CD8-positive, alpha-beta T cell (primary cell): ENCODE measurements at regions of chr15 and their contacts with region 1.

Region 1: DNA sequence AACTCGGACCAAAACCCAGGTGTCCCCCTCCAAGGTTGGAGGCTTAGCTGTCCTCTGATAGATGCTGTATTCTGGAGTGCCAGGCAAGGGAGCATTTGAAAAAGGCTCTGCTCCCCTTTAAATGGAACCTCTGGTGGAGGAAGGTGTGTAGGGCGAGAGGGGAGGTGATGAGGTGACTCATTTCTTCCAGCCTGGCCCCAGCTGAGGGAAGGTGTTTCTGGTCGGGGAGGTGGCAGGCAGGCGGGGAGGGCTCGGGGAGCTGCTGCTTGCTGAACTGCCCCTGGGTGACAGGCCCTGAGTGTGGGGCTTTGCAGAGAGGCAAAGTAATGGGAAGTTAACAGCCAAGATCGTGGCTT is 18.8 kb downstream of the PSTPIP1 start:
- DNase-seq: peak; percentile 57 to 94 (median 90)
- ATAC-seq: peak; percentile 77
- H3K4me3 ChIP-seq: peak overlapping the region; percentile 29 to 30
- H3K4me3 Mint-ChIP-seq: peak overlapping the region; percentile 82
- H3K27ac ChIP-seq: peak overlapping the region; percentile 35 to 85
- H3K27ac Mint-ChIP-seq: peak overlapping the region; percentile 97
- H3K4me1 ChIP-seq: peaks cover 97% of the 10 kb centered on the region
- H3K4me1 Mint-ChIP-seq: peaks cover 92% of the 10 kb centered on the region
- H3K27me3 ChIP-seq: no peaks in the 10 kb centered on the region
- H3K27me3 Mint-ChIP-seq: no peaks in the 10 kb centered on the region
- CTCF ChIP-seq: no peak

Region 2: GRCh38 chr15:76931397-76932007 is 82.3 kb before region 1 on chr15 and contains the start of gene RCN2:
- CTCF ChIA-PET with region 1: no interaction called
- POLR2A ChIA-PET with region 1: interaction called, 5 read pairs
- intact Hi-C with region 1: loop called in 1 of 2 experiments (anchors 1 kb)
- DNase-seq: peak; percentile 81 to 96 (median 93)
- ATAC-seq: peak; percentile 97
- H3K4me3 ChIP-seq: peak within 1 kb of the TSS; percentile 62 to 63
- H3K4me3 Mint-ChIP-seq: peak within 1 kb of the TSS; percentile 90
- H3K27ac ChIP-seq: peak within 1 kb of the TSS; percentile 63 to 65
- H3K27ac Mint-ChIP-seq: peak within 1 kb of the TSS; percentile 91
- H3K4me1 ChIP-seq: peaks cover 24% of the 10 kb centered on the region
- H3K4me1 Mint-ChIP-seq: peaks cover 34% of the 10 kb centered on the region
- H3K27me3 ChIP-seq: no peaks in the 10 kb centered on the region
- H3K27me3 Mint-ChIP-seq: no peaks in the 10 kb centered on the region
- CTCF ChIP-seq: no peak
- total RNA-seq, gene RCN2: 25.9 to 29.7 TPM

Region 3: GRCh38 chr15:76941636-76942035 is 72.1 kb before region 1 on chr15:
- CTCF ChIA-PET with region 1: no interaction called
- POLR2A ChIA-PET with region 1: no interaction called
- intact Hi-C with region 1: no loop called
- DNase-seq: no peak
- ATAC-seq: no peak
- H3K4me3 ChIP-seq: no peak overlapping the region
- H3K4me3 Mint-ChIP-seq: no peak overlapping the region
- H3K27ac ChIP-seq: no peak overlapping the region
- H3K27ac Mint-ChIP-seq: no peak overlapping the region
- H3K4me1 ChIP-seq: no peaks in the 10 kb centered on the region
- H3K4me1 Mint-ChIP-seq: peaks cover 5% of the 10 kb centered on the region
- H3K27me3 ChIP-seq: no peaks in the 10 kb centered on the region
- H3K27me3 Mint-ChIP-seq: no peaks in the 10 kb centered on the region
- CTCF ChIP-seq: no peak

Region 4: GRCh38 chr15:76973362-76973743 is 40.4 kb before region 1 on chr15:
- CTCF ChIA-PET with region 1: interaction called, 11 read pairs
- POLR2A ChIA-PET with region 1: interaction called, 3 read pairs
- intact Hi-C with region 1: loop called in 1 of 2 experiments (anchors 1 kb)
- DNase-seq: peak; percentile 39 to 85 (median 75)
- ATAC-seq: peak; percentile 84
- H3K4me3 ChIP-seq: no peak overlapping the region
- H3K4me3 Mint-ChIP-seq: no peak overlapping the region
- H3K27ac ChIP-seq: no peak overlapping the region
- H3K27ac Mint-ChIP-seq: no peak overlapping the region
- H3K4me1 ChIP-seq: peaks cover 4% of the 10 kb centered on the region
- H3K4me1 Mint-ChIP-seq: peaks cover 14% of the 10 kb centered on the region
- H3K27me3 ChIP-seq: no peaks in the 10 kb centered on the region
- H3K27me3 Mint-ChIP-seq: no peaks in the 10 kb centered on the region
- CTCF ChIP-seq: peak; percentile 86

Region 5: DNA sequence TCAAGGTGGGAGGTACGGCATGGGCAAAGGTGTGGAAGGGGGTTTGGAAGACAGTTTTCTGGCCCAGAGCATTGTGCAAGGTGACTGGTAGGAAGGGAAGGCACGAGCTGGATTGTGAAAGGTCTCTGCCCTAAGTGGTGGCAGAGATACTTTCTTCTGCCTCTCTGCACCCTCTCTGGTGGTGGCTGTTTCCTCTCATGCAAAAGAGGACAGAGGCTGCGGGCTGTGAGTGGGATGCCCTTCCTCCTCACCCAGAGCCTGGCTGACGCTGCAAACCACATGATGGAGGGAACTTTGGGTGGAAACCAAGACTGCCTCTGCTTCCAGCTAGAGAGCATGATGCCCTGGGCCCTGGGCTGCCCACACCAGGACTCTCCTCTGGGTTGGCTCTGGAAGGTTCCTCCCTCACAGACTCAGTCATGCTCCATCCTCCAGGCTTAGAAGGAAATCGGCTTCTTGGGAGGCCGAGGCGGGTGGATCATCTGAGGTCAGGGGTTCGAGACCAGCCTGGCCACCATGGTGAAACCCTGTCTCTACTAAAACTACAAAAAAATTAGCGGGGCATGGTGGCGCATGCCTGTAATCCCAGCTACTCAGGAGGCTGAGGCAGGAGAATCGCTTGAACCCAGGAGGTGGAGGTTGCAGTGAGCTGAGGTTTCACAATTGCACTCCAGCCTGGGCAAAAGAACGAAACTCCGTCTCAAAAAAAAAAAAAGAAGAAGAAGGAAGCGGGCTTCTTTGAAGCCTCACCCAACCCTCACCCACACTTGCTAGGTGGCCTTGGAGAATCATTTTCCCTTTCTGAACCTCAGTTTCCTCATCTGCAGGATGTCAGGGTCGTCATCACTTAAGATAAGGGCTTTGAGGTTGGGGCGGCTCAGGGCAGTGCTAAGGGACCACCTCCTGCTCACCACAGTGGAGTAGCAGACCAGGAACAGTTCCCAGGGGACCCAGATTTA is 10.5 kb before region 1 on chr15:
- CTCF ChIA-PET with region 1: interaction called, 7 read pairs
- POLR2A ChIA-PET with region 1: interaction called, 12 read pairs
- intact Hi-C with region 1: loop called (anchors 1 kb)
- DNase-seq: peak; percentile 43 to 91 (median 71)
- ATAC-seq: peak; percentile 78
- H3K4me3 ChIP-seq: peak overlapping the region; percentile 20 to 30
- H3K4me3 Mint-ChIP-seq: peak overlapping the region; percentile 73
- H3K27ac ChIP-seq: peak overlapping the region; percentile 22 to 74
- H3K27ac Mint-ChIP-seq: peak overlapping the region; percentile 96
- H3K4me1 ChIP-seq: peaks cover 71% of the 10 kb centered on the region
- H3K4me1 Mint-ChIP-seq: peaks cover 92% of the 10 kb centered on the region
- H3K27me3 ChIP-seq: no peaks in the 10 kb centered on the region
- H3K27me3 Mint-ChIP-seq: no peaks in the 10 kb centered on the region
- CTCF ChIP-seq: no peak

Region 6: DNA sequence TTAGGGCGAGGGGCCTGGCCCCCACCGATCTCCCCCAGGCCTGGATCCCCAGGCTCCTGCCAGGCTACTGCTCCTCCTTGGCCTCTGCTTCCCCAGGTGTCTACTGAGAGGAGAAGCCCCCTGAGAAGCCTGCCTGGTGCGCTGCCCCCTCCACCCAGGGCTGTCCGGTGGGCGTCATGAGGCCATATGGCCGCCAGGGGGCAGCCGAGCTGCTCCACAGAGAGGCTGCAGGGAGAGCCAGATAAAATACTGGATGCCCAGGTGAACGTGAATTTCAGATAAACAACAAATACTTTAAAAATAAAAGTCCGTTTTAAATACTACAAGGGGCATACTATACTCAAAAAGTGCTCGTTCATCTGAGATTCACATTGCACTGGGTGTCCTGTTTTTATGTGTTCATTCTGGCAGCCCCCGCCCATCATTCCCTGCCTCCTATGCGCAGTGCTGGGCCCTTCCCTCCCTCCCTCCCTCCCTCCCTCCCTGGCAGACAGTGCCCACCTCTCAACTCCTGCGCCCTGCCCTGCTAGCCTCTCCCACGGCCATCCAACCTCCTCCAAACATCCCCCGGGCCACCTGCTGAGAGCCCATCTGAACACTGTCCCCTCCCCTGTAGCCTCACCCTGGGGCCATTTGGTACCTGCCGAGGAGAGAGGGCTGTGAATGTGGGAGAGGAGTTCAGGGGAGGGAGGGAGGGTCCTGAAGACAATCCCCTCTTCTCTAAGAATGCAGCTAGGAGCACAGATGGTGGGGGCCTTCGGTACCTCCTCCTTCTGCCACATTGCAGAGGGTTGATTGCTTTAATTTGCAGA is 10.7 kb after region 1 on chr15:
- CTCF ChIA-PET with region 1: interaction called, 8 read pairs
- POLR2A ChIA-PET with region 1: interaction called, 8 read pairs
- intact Hi-C with region 1: loop called in 1 of 2 experiments (anchors 1 kb)
- DNase-seq: peak; percentile 39 to 83 (median 71)
- ATAC-seq: no peak
- H3K4me3 ChIP-seq: no peak overlapping the region
- H3K4me3 Mint-ChIP-seq: no peak overlapping the region
- H3K27ac ChIP-seq: peak overlapping the region in 1 of 2 experiments; percentile 85
- H3K27ac Mint-ChIP-seq: peak overlapping the region; percentile 74
- H3K4me1 ChIP-seq: peaks cover 49% of the 10 kb centered on the region
- H3K4me1 Mint-ChIP-seq: peaks cover 56% of the 10 kb centered on the region
- H3K27me3 ChIP-seq: no peaks in the 10 kb centered on the region
- H3K27me3 Mint-ChIP-seq: no peaks in the 10 kb centered on the region
- CTCF ChIP-seq: peak; percentile 96

Region 7: GRCh38 chr15:77738441-77739302 is 724.9 kb after region 1 on chr15:
- CTCF ChIA-PET with region 1: no interaction called
- POLR2A ChIA-PET with region 1: no interaction called
- intact Hi-C with region 1: no loop called
- DNase-seq: no peak
- ATAC-seq: no peak
- H3K4me3 ChIP-seq: no peak overlapping the region
- H3K4me3 Mint-ChIP-seq: no peak overlapping the region
- H3K27ac ChIP-seq: no peak overlapping the region
- H3K27ac Mint-ChIP-seq: no peak overlapping the region
- H3K4me1 ChIP-seq: no peaks in the 10 kb centered on the region
- H3K4me1 Mint-ChIP-seq: no peaks in the 10 kb centered on the region
- H3K27me3 ChIP-seq: no peaks in the 10 kb centered on the region
- H3K27me3 Mint-ChIP-seq: peaks cover 19% of the 10 kb centered on the region
- CTCF ChIP-seq: no peak